ENCODE measurements at regions of chr14 and their contacts with region 1.

Region 1: GRCh38 chr14:91244501-91244901 is at the start of gene GPR68:
- DNase-seq: no peak
- H3K4me3 Mint-ChIP-seq: peak within 1 kb of the TSS; percentile 96
- H3K27ac Mint-ChIP-seq: peak within 1 kb of the TSS; percentile 97
- H3K4me1 Mint-ChIP-seq: peaks cover 82% of the 10 kb centered on the region
- H3K27me3 Mint-ChIP-seq: no peaks in the 10 kb centered on the region
- total RNA-seq, gene GPR68: 36.9 to 39.8 TPM

Region 2: GRCh38 chr14:91177073-91178034 is 67.1 kb before region 1 on chr14:
- CTCF ChIA-PET with region 1: interaction called, 56 read pairs
- POLR2A ChIA-PET with region 1: interaction called, 142 read pairs
- DNase-seq: peak; percentile 79
- H3K4me3 Mint-ChIP-seq: no peak overlapping the region
- H3K27ac Mint-ChIP-seq: peak overlapping the region; percentile 77
- H3K4me1 Mint-ChIP-seq: peaks cover 25% of the 10 kb centered on the region
- H3K27me3 Mint-ChIP-seq: no peaks in the 10 kb centered on the region

Region 3: GRCh38 chr14:91220581-91221274 is 23.8 kb before region 1 on chr14:
- CTCF ChIA-PET with region 1: interaction called, 3 read pairs
- POLR2A ChIA-PET with region 1: interaction called, 886 read pairs
- DNase-seq: no peak
- H3K4me3 Mint-ChIP-seq: no peak overlapping the region
- H3K27ac Mint-ChIP-seq: no peak overlapping the region
- H3K4me1 Mint-ChIP-seq: peaks cover 56% of the 10 kb centered on the region
- H3K27me3 Mint-ChIP-seq: no peaks in the 10 kb centered on the region

Region 4: GRCh38 chr14:91264151-91265150 is 19.9 kb after region 1 on chr14:
- CTCF ChIA-PET with region 1: interaction called, 12 read pairs
- POLR2A ChIA-PET with region 1: interaction called, 559 read pairs
- DNase-seq: peak; percentile 50
- H3K4me3 Mint-ChIP-seq: peak overlapping the region; percentile 68
- H3K27ac Mint-ChIP-seq: no peak overlapping the region
- H3K4me1 Mint-ChIP-seq: peaks cover 63% of the 10 kb centered on the region
- H3K27me3 Mint-ChIP-seq: no peaks in the 10 kb centered on the region

Region 5: GRCh38 chr14:91317381-91318308 is 73.1 kb after region 1 on chr14:
- CTCF ChIA-PET with region 1: no interaction called
- POLR2A ChIA-PET with region 1: interaction called, 45 read pairs
- DNase-seq: peak; percentile 86
- H3K4me3 Mint-ChIP-seq: peak overlapping the region; percentile 46
- H3K27ac Mint-ChIP-seq: peak overlapping the region; percentile 95
- H3K4me1 Mint-ChIP-seq: peaks cover 83% of the 10 kb centered on the region
- H3K27me3 Mint-ChIP-seq: no peaks in the 10 kb centered on the region

Region 6: DNA sequence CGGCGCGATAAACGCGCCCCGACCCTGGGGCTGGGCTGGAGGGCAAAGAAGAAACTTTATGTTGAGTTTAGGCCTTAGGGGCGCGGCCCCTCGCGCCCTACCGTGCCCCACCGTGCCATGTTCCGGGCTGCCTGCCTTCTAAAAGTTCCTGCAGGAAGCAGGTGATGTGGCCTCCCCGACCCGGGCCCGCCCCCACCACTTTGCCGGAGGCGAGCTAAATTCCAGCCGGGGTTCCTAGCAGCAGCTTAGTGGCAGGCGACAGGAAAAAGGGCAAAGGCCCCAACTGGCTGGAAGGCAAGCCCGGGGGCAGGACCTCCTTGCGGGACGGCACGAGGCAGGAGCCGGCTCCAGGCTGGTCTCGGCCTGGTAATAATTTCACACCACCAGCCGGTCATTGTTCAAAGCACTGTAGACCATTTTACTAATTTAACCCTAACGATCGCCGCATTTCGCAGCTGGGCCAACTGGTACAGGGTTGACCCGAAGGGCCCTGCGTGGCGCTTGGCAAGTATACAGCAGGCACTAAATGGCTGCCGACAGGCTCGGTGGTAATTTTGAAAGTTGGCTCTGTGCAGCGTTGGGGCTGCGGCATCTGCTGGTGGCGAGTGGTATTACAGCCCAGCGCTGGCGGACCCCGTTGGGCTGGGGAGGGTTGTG is 174.0 kb after region 1 on chr14:
- CTCF ChIA-PET with region 1: no interaction called
- POLR2A ChIA-PET with region 1: interaction called, 60 read pairs
- DNase-seq: peak; percentile 84
- H3K4me3 Mint-ChIP-seq: peak overlapping the region; percentile 72
- H3K27ac Mint-ChIP-seq: peak overlapping the region; percentile 73
- H3K4me1 Mint-ChIP-seq: peaks cover 29% of the 10 kb centered on the region
- H3K27me3 Mint-ChIP-seq: peaks cover 8% of the 10 kb centered on the region

Region 7: GRCh38 chr14:91439345-91439744 is 194.8 kb after region 1 on chr14:
- CTCF ChIA-PET with region 1: no interaction called
- POLR2A ChIA-PET with region 1: no interaction called
- DNase-seq: no peak
- H3K4me3 Mint-ChIP-seq: no peak overlapping the region
- H3K27ac Mint-ChIP-seq: no peak overlapping the region
- H3K4me1 Mint-ChIP-seq: no peaks in the 10 kb centered on the region
- H3K27me3 Mint-ChIP-seq: peaks cover 20% of the 10 kb centered on the region